Ascending aorta (tissue), 2 donors: ENCODE measurements at regions of chr18 and their contacts with region 1.

Region 1: GRCh38 chr18:7177116-7177744 is 53.7 kb upstream of the LRRC30 start:
- DNase-seq: no peak
- H3K4me3 ChIP-seq: no peak overlapping the region
- H3K27ac ChIP-seq: no peak overlapping the region
- H3K4me1 ChIP-seq: no peaks in the 10 kb centered on the region
- H3K27me3 ChIP-seq: no peaks in the 10 kb centered on the region
- CTCF ChIP-seq: peak; percentile 21 to 65 (median 50)

Region 2: DNA sequence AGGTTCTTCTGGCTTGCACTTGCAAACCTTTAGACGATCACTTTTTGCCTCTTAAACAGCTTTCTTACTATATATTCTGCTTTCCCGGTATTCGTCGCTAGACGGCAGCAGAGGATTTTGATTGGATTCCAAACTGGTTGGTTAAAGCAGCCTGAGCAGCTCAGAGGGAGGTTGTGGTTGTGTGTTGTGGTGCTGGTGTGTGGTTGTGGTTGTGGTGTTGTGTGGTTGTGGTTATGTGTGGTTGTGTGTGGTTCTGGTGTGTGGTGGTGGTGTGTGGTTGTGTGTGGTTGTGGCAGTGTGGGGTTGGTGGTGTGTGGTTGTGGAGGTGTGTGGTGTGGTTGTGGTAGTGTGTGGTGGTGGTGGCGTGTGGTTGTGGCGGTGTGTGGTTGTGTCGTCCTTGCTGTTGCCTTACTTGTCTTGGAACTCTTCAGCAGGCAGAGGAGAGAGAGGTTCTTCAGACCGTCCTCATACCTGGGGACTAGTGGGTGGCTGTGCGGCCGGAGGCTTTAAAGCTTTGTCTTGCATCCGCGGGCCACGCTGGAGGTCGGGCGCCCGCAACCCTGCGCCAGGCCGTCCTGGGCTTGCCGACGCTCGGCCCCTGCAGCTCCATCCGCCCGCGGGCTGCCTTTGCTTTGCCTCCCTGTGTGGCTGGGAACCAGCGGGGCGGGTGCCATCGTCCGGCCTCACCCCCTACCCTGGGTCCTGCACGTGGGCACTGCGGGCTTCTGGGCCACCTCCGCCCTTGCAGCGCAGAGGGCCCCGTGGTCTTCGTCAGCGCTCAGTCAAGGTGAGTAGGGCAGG is 256.9 kb before region 1 on chr18:
- intact Hi-C with region 1: loop called (anchors 2 kb)
- DNase-seq: no peak
- H3K4me3 ChIP-seq: no peak overlapping the region
- H3K27ac ChIP-seq: no peak overlapping the region
- H3K4me1 ChIP-seq: no peaks in the 10 kb centered on the region
- H3K27me3 ChIP-seq: no peaks in the 10 kb centered on the region
- CTCF ChIP-seq: peak; percentile 13 to 49 (median 26)

Region 3: DNA sequence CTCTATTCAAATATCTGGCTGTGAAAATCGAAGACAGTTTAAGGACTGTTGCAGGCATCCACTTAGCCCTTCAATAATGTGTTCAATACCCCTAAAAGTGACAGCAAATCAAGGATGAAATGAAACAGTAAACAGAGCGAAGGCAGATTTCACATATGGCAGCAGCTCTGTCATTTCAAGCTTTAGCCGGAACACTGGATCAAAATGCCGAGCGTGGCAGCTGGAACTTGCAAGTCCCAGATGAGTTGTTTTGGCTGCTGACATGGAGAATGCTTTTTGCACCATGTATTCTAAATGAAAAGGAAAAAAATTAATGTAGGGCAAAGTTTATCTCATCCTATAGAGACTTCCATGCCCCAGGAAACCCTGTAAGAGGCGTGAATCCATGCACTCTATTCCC is 71.6 kb after region 1 on chr18:
- intact Hi-C with region 1: no loop called
- DNase-seq: no peak
- H3K4me3 ChIP-seq: no peak overlapping the region
- H3K27ac ChIP-seq: no peak overlapping the region
- H3K4me1 ChIP-seq: no peaks in the 10 kb centered on the region
- H3K27me3 ChIP-seq: no peaks in the 10 kb centered on the region
- CTCF ChIP-seq: no peak